ENCODE measurements at regions of chr10 and their contacts with region 1.

Region 1: DNA sequence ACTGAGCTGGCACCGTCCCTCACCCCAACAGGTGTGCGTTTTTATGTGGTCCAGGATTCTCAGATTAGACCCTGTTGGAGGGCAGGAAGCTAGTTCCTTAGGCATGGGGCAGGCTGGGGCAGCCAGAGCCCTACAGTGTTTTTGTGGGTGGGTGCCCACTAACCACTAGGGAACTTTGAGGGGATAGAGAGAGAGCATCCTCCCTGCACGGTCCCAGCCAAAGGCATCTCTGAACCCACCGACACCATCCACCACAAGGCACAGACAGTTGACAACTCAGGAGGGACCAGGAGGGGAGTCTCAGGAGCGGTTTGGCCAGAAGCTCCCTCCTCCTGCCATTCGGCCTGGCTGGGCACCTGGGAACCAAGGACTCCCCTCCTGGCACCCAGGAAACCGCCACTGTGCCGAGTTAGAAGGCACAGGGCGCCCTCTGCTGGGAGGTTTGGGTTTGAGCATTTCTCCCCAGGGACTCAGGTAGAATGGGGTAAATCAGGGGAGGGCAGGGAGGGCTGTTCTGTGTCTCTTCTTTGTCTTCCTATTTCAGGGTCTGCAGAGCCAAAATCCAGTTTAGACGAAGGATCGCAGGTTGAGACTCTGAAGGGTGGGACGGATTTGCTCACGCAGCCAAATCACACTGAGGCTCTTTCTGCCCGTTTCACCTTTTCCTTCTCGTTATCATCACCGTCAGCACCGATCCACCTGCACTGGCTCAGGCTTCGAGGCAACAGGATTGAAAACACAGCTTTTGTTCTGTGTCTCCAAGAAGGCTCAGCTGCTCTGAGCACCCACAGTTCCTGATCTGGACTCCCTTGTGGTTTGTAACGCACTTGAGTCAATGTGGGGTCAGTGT is 84.8 kb upstream of the COL13A1 start:
- DNase-seq: peak; percentile 46 to 93
- H3K4me3 ChIP-seq: no peak overlapping the region
- H3K27ac ChIP-seq: no peak overlapping the region
- H3K4me1 ChIP-seq: peaks cover 0 to 2% (median under 1%) of the 10 kb centered on the region in 4 experiments; a peak in 3 of 7 replicates
- H3K27me3 ChIP-seq: no peaks in the 10 kb centered on the region
- CTCF ChIP-seq: peak; percentile 81 to 98 (median 89)
- EP300 ChIP-seq: no peak
- POLR2A ChIP-seq: no peak
- RAD21 ChIP-seq: peak; percentile 96 to 99

Region 2: DNA sequence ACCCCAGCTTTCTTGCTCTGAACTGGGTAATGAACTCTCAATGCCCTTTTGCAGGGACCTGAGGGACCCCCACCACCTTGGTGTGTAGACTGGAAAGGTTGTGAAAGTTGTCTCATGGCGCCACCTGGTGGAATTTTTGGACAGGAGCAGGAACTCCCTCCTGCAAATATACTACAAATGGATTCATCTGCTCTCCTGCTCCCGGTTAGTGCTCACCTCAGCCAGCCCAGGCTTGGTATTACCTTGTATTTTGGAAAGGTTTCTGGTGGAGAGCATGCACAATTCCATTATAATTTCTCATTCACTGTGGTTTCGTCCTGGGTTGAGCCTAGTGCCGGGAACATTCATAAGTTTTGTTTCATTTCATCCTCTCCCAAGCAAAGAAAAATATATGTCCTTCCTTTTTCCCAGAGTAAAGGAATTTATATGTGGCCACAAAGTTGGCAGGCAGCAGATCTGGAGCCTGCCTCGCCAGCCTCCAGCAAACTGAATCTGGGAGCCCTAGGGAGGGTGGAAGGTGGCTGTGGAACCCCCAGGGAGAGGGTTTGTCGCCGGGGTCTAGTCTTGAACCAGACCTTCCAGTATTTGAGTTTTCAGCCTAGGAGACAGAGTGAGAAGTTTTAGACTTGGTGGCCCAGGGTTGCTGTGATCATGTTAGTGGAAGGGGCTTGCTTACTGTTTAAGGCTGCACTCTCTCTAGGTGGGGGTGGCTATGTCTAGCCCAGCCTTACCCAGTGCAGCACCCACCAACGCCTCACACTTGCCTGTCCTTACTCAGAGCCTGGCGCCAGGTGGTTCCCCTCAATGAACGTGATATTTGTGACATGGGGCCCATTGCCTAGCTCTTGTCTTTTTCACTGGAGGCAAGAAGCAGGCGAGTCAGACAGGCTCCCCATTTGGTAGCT is 77.4 kb before region 1 on chr10:
- CTCF ChIA-PET with region 1: interaction called, 992 read pairs
- POLR2A ChIA-PET with region 1: no interaction called
- DNase-seq: peak in 1 of 2 experiments; percentile 80
- H3K4me3 ChIP-seq: no peak overlapping the region
- H3K27ac ChIP-seq: no peak overlapping the region
- H3K4me1 ChIP-seq: peaks cover 4 to 9% (median 7%) of the 10 kb centered on the region in 4 experiments
- H3K27me3 ChIP-seq: no peaks in the 10 kb centered on the region
- CTCF ChIP-seq: peak; percentile 64 to 97 (median 89)
- EP300 ChIP-seq: 0 out of 3 replicates have a peak, but pooled peaks of 1 of the 2 experiments have one; percentile 33
- POLR2A ChIP-seq: no peak
- RAD21 ChIP-seq: peak; percentile 98 to 99

Region 3: GRCh38 chr10:69684020-69684980 is 32.6 kb before region 1 on chr10:
- CTCF ChIA-PET with region 1: interaction called, 260 read pairs
- POLR2A ChIA-PET with region 1: no interaction called
- DNase-seq: no peak
- H3K4me3 ChIP-seq: no peak overlapping the region
- H3K27ac ChIP-seq: no peak overlapping the region
- H3K4me1 ChIP-seq: peaks cover 0 to 6% (median 3%) of the 10 kb centered on the region in 4 experiments; a peak in 4 of 7 replicates
- H3K27me3 ChIP-seq: no peaks in the 10 kb centered on the region
- CTCF ChIP-seq: no peak
- EP300 ChIP-seq: no peak
- POLR2A ChIP-seq: no peak
- RAD21 ChIP-seq: no peak

Region 4: GRCh38 chr10:69703766-69704638 is 12.9 kb before region 1 on chr10:
- CTCF ChIA-PET with region 1: interaction called, 260 read pairs
- POLR2A ChIA-PET with region 1: interaction called, 3 read pairs
- DNase-seq: no peak
- H3K4me3 ChIP-seq: no peak overlapping the region
- H3K27ac ChIP-seq: no peak overlapping the region
- H3K4me1 ChIP-seq: no peaks in the 10 kb centered on the region
- H3K27me3 ChIP-seq: no peaks in the 10 kb centered on the region
- CTCF ChIP-seq: no peak
- EP300 ChIP-seq: no peak
- POLR2A ChIP-seq: no peak
- RAD21 ChIP-seq: no peak

Region 5: GRCh38 chr10:69734797-69735521 is 18.0 kb after region 1 on chr10:
- CTCF ChIA-PET with region 1: interaction called, 46 read pairs
- POLR2A ChIA-PET with region 1: interaction called, 3 read pairs
- DNase-seq: no peak
- H3K4me3 ChIP-seq: no peak overlapping the region
- H3K27ac ChIP-seq: no peak overlapping the region
- H3K4me1 ChIP-seq: peaks cover 0 to 10% (median 1%) of the 10 kb centered on the region in 4 experiments; a peak in 3 of 7 replicates
- H3K27me3 ChIP-seq: no peaks in the 10 kb centered on the region
- CTCF ChIP-seq: no peak
- EP300 ChIP-seq: no peak
- POLR2A ChIP-seq: no peak
- RAD21 ChIP-seq: no peak

Region 6: GRCh38 chr10:69869291-69869961 is 152.5 kb after region 1 on chr10:
- CTCF ChIA-PET with region 1: no interaction called
- POLR2A ChIA-PET with region 1: no interaction called
- DNase-seq: no peak
- H3K4me3 ChIP-seq: no peak overlapping the region
- H3K27ac ChIP-seq: no peak overlapping the region
- H3K4me1 ChIP-seq: peaks cover 18 to 73% (median 49%) of the 10 kb centered on the region in 4 experiments
- H3K27me3 ChIP-seq: no peaks in the 10 kb centered on the region; a peak in 1 of 7 replicates
- CTCF ChIP-seq: no peak
- EP300 ChIP-seq: no peak
- POLR2A ChIP-seq: no peak
- RAD21 ChIP-seq: no peak